ENCODE measurements at regions of chr11 and their contacts with region 1.

Region 1: GRCh38 chr11:75525596-75526541 is at the start of gene GDPD5:
- DNase-seq: peak; percentile 85 to 92 (median 86)
- ATAC-seq: peak; percentile 88 to 98 (median 96)
- H3K4me3 ChIP-seq: peak within 1 kb of the TSS; percentile 63 to 96 (median 77)
- H3K27ac ChIP-seq: peak within 1 kb of the TSS in 4 of 12 donors; percentile 18 to 62 (median 34)
- H3K4me1 ChIP-seq: peaks cover 0 to 33% (median 16%) of the 10 kb centered on the region in 12 donors
- H3K27me3 ChIP-seq: no peaks in the 10 kb centered on the region
- CTCF ChIP-seq: peak in 10 of 12 donors; percentile 39 to 73 (median 64)
- POLR2A ChIP-seq: peak in 1 of 2 donors; percentile 56
- total RNA-seq, gene GDPD5: 2.0 to 12.5 (median 5.1) TPM

Region 2: GRCh38 chr11:75399344-75400145 is 126.3 kb before region 1 on chr11 and contains the start of gene RPS3:
- intact Hi-C with region 1: loop called in 6 of 10 experiments (anchors 2 to 5 kb)
- DNase-seq: peak; percentile 92 to 95 (median 94)
- ATAC-seq: peak; percentile 91 to 98 (median 97)
- H3K4me3 ChIP-seq: peak within 1 kb of the TSS; percentile 55 to 96 (median 76)
- H3K27ac ChIP-seq: peak within 1 kb of the TSS; percentile 81 to 95 (median 88)
- H3K4me1 ChIP-seq: peaks cover 0 to 35% (median 26%) of the 10 kb centered on the region in 12 donors
- H3K27me3 ChIP-seq: no peaks in the 10 kb centered on the region
- CTCF ChIP-seq: peak in 3 of 12 donors; percentile 30 to 44 (median 35)
- POLR2A ChIP-seq: peak in 1 of 2 donors; percentile 92
- total RNA-seq, gene RPS3: 434 to 1,232 (median 990) TPM

Region 3: DNA sequence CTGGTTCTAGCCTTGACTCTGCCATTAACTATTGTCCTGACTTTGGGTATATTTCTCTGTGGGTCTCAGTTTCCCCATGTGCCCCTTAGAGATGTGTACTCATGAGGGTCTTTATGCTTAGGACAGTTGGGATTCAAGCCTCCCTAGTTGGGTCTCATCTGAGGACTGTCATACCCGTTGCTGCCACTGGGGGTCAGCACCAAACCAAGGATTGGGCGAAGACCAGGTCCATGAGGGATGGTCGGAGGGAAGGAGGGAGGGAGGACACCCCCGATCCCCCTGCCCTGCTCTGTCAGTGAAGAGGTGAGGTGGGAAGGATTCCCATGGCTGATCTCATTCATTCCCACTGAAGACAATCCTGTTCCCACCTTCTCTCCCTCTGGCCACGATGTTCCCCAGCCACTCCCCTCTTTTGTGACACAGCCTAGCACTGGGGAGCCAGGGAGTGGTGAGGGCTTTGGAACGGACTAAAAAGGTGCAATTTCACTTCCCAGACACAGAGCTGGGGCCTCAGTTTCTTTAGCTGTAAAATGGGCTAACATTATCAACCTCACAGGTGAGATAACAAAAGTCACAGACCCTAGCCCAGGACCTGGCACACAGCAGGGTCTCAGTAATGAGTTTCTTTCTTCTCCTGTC is 80.4 kb before region 1 on chr11:
- intact Hi-C with region 1: loop called in 3 of 10 experiments (anchors 1 to 2 kb)
- DNase-seq: peak in 4 of 5 donors; percentile 58 to 71 (median 63)
- ATAC-seq: peak in 3 of 4 donors; percentile 64 to 74 (median 73)
- H3K4me3 ChIP-seq: no peak overlapping the region
- H3K27ac ChIP-seq: no peak overlapping the region
- H3K4me1 ChIP-seq: peaks cover 0 to 7% (median 0%) of the 10 kb centered on the region in 12 donors
- H3K27me3 ChIP-seq: no peaks in the 10 kb centered on the region
- CTCF ChIP-seq: peak; percentile 92 to 98 (median 94)
- POLR2A ChIP-seq: no peak

Region 4: GRCh38 chr11:75462117-75462812 is 63.6 kb before region 1 on chr11:
- intact Hi-C with region 1: loop called in 2 of 10 experiments (anchors 5 kb)
- DNase-seq: peak in 1 of 5 donors; percentile 6
- ATAC-seq: no peak
- H3K4me3 ChIP-seq: no peak overlapping the region
- H3K27ac ChIP-seq: no peak overlapping the region
- H3K4me1 ChIP-seq: peaks cover 0 to 18% (median 6%) of the 10 kb centered on the region in 12 donors
- H3K27me3 ChIP-seq: no peaks in the 10 kb centered on the region
- CTCF ChIP-seq: no peak
- POLR2A ChIP-seq: no peak

Measured in heart left ventricle (tissue), 16 donors.